ENCODE measurements at regions of chr4 and their contacts with region 1.

Region 1: DNA sequence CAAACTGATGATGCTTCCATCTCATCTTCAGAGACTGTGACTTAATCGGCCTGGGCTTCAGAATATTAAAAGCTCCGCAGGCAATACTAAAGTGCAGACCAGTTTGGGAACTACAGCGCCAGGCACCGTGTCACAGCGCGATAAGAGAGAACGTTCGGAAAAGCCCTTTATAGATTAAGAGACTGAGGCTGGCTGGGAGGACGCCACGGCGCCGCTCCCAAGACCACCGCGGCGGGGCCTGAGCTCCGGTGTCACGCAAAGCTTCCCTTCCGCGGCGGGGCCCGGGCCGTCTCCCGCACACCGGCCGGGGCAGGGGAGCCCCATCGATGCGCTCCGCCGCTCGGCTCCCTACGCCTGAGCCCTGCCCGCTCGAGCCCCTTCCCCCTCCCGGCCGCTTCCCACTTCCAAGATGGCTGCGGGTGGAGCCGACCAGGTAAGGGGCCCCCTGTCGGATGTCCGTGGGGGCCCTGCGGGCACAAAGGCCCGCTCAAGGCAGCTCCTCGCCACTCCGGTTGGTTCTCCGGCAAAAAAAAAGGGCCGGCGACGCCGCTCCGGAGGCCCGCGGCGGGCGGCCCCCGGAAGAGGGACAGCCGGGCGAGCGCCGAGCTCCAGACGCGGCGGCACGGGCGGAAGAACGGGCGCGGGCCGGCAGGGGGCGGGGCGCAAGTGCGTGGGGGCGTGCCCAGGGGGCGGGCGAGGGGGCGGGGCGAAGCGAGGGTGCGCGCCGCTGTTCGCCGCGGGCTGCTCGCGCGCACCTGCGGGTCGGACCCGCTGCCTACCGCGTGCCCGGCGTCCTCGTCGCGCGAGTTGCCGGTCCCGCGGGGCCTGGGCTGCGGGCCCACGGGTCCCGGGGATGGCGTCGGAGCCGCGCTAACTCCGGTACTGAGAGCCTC is at the start of gene TBC1D14:
- DNase-seq: peak; percentile 90 to 94
- ATAC-seq: peak; percentile 88 to 94 (median 93)
- H3K4me3 ChIP-seq: peak within 1 kb of the TSS; percentile 81
- H3K27ac ChIP-seq: peak within 1 kb of the TSS; percentile 99
- H3K4me1 ChIP-seq: peaks cover 47% of the 10 kb centered on the region
- H3K27me3 ChIP-seq: no peaks in the 10 kb centered on the region
- CTCF ChIP-seq: peak; percentile 16
- total RNA-seq, gene TBC1D14: 32.7 to 45.5 (median 35.6) TPM

Region 2: GRCh38 chr4:6560416-6561172 is 348.7 kb before region 1 on chr4:
- intact Hi-C with region 1: no loop called
- DNase-seq: peak in 1 of 2 donors; percentile 49
- ATAC-seq: no peak
- H3K4me3 ChIP-seq: no peak overlapping the region
- H3K27ac ChIP-seq: no peak overlapping the region
- H3K4me1 ChIP-seq: peaks cover 4% of the 10 kb centered on the region
- H3K27me3 ChIP-seq: peaks cover 0 to 87% (median 23%) of the 10 kb centered on the region in 3 donors
- CTCF ChIP-seq: no peak

Region 3: GRCh38 chr4:6595897-6596537 is 313.3 kb before region 1 on chr4:
- intact Hi-C with region 1: no loop called
- DNase-seq: no peak
- ATAC-seq: no peak
- H3K4me3 ChIP-seq: no peak overlapping the region
- H3K27ac ChIP-seq: no peak overlapping the region
- H3K4me1 ChIP-seq: no peaks in the 10 kb centered on the region
- H3K27me3 ChIP-seq: peaks cover 0 to 10% (median 10%) of the 10 kb centered on the region in 3 donors
- CTCF ChIP-seq: no peak

Region 4: GRCh38 chr4:6963139-6963611 is 53.9 kb after region 1 on chr4:
- intact Hi-C with region 1: loop called in 1 of 2 experiments (anchors 5 kb)
- DNase-seq: no peak
- ATAC-seq: peak; percentile 14 to 55 (median 32)
- H3K4me3 ChIP-seq: no peak overlapping the region
- H3K27ac ChIP-seq: no peak overlapping the region
- H3K4me1 ChIP-seq: peaks cover 30% of the 10 kb centered on the region
- H3K27me3 ChIP-seq: no peaks in the 10 kb centered on the region
- CTCF ChIP-seq: no peak

Region 5: GRCh38 chr4:6986781-6987587 is 77.7 kb after region 1 on chr4:
- intact Hi-C with region 1: loop called in 1 of 2 experiments (anchors 2 kb)
- DNase-seq: peak; percentile 96 to 98
- ATAC-seq: peak; percentile 93 to 97 (median 96)
- H3K4me3 ChIP-seq: peak overlapping the region; percentile 67
- H3K27ac ChIP-seq: peak overlapping the region; percentile 87
- H3K4me1 ChIP-seq: peaks cover 75% of the 10 kb centered on the region
- H3K27me3 ChIP-seq: no peaks in the 10 kb centered on the region
- CTCF ChIP-seq: no peak

Region 6: GRCh38 chr4:7067452-7068278 is 158.3 kb after region 1 on chr4 and contains the start of gene GRPEL1:
- intact Hi-C with region 1: loop called (anchors 2 to 5 kb)
- DNase-seq: peak; percentile 100
- ATAC-seq: peak; percentile 94 to 97 (median 96)
- H3K4me3 ChIP-seq: peak within 1 kb of the TSS; percentile 84
- H3K27ac ChIP-seq: peak within 1 kb of the TSS; percentile 93
- H3K4me1 ChIP-seq: peaks cover 23% of the 10 kb centered on the region
- H3K27me3 ChIP-seq: no peaks in the 10 kb centered on the region
- CTCF ChIP-seq: no peak
- total RNA-seq, gene GRPEL1: 41.4 to 66.1 (median 57.8) TPM

Region 7: DNA sequence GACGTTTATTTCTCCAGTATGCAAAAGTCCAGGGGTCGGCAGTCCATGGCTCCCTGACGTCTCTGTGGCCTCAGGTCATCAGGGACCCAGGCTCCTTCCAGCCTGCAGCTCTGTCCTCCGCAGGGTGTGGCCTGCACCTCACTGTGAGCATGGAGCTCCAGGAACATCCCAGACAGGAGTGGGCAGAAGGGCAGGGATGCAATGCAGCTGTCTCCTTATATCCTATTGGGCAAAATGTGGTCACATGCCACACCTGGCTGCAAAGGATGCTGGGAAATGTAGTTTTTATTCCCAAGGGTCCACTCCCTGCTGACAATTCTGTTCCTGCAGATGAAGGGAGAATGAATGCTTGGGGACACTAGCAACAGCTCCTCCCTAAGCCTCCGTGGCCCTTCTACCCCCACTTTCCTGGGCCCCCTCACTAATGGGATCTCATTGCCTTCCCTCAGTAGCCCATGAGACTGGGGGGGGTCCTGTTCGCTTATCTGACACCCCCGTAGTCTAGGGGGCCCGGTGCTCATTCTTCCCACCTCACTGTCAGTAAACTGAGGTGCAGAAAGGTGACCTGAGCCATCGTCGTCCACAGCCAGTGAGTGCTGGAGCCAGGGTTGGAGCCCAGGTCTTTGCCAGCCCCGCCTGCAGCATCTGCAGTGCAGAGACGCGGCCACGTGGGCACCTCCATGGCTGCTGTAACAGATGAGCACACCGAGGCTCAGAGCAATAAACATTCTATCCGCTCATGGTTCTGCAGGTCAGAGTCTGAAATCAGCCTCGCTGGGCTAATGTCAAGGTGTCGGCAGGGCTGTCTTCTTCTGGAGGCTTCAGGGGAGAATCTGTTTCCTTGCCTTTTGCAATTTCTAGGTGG is 164.4 kb after region 1 on chr4:
- intact Hi-C with region 1: loop called (anchors 2 to 5 kb)
- DNase-seq: no peak
- ATAC-seq: peak; percentile 58 to 76 (median 64)
- H3K4me3 ChIP-seq: no peak overlapping the region
- H3K27ac ChIP-seq: peak overlapping the region; percentile 81
- H3K4me1 ChIP-seq: peaks cover 16% of the 10 kb centered on the region
- H3K27me3 ChIP-seq: no peaks in the 10 kb centered on the region
- CTCF ChIP-seq: no peak